Aorta (tissue), 5 donors: ENCODE measurements at regions of chrX and their contacts with region 1.

Region 1: DNA sequence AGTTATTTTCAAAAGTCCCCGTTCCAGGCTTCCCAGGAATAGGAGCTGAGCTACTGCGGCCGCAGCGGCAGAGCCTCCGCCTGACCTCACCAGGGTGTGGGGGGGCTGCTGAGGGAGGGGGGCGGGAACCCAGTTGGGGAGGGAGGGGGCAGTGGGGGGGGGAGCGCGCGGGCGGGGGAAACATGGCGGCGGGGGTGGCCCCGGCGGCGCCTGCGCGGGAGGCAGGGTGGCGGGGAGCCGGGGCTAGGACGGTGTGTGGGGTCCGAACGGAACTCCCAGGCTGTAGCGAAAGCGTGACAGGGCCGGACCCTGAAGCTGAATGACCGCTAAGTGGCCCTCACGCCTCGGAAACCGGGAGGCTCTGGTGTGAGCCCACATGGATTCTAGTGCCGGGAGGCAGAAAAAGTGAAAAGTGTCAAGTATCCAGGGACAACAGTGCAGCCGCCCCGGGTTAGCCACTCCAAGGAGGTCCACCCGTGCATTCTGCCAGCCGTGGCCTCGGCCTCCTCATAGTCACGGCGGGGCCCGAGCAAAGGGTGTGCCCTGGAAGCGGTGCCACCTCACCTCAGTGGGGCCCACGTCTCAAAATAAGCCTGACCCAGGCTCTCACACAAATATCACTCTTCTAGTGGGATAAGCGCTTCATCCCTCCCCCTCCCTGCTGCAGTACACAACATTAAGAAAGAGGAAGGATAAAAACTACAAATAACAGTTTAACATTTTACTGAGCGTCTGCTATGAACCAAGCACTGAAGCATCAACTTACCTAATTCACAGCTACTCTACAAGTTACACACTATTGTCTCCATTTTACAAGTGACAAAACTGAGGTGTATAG is at the start of gene KLHL13:
- DNase-seq: peak; percentile 48 to 76
- ATAC-seq: peak; percentile 76
- H3K4me3 ChIP-seq: peak within 1 kb of the TSS; percentile 36 to 82
- H3K27ac ChIP-seq: peak within 1 kb of the TSS in 1 of 2 donors; percentile 61
- H3K4me1 ChIP-seq: no peaks in the 10 kb centered on the region
- H3K27me3 ChIP-seq: no peaks in the 10 kb centered on the region
- total RNA-seq, gene KLHL13: 4.6 to 6.8 TPM

Region 2: DNA sequence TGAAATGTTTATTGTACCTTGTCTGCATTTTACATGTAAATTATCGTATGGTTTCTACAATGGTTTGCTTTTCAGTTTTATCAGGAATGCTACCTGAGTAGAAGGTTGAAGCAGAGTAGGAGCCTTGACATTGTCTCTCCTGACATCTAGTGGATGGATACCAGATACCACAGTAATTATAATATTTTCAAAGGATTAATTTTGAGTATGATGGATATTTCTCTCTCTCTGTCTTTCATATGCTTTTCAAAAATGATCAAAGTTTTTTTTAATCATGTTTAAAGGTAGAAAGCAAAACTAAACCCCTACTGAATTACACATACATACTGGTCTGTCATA is 109.1 kb after region 1 on chrX:
- intact Hi-C with region 1: loop called in 1 of 2 experiments (anchors 10 kb)
- DNase-seq: no peak
- ATAC-seq: no peak
- H3K4me3 ChIP-seq: no peak overlapping the region
- H3K27ac ChIP-seq: no peak overlapping the region
- H3K4me1 ChIP-seq: peaks cover 0 to 2% of the 10 kb centered on the region in 2 donors
- H3K27me3 ChIP-seq: no peaks in the 10 kb centered on the region

Region 3: GRCh38 chrX:118383120-118383519 is 266.2 kb after region 1 on chrX:
- intact Hi-C with region 1: no loop called
- DNase-seq: no peak
- ATAC-seq: no peak
- H3K4me3 ChIP-seq: no peak overlapping the region
- H3K27ac ChIP-seq: no peak overlapping the region
- H3K4me1 ChIP-seq: no peaks in the 10 kb centered on the region
- H3K27me3 ChIP-seq: no peaks in the 10 kb centered on the region

Region 4: GRCh38 chrX:119055687-119056086 is 938.8 kb after region 1 on chrX:
- intact Hi-C with region 1: no loop called
- DNase-seq: no peak
- ATAC-seq: no peak
- H3K4me3 ChIP-seq: no peak overlapping the region
- H3K27ac ChIP-seq: no peak overlapping the region
- H3K4me1 ChIP-seq: no peaks in the 10 kb centered on the region
- H3K27me3 ChIP-seq: no peaks in the 10 kb centered on the region